Activated B cell treated with CpG ODN at 0.5 μM for 24 hours (primary cell): ENCODE measurements at regions of chr12 and their contacts with region 1.

Region 1: DNA sequence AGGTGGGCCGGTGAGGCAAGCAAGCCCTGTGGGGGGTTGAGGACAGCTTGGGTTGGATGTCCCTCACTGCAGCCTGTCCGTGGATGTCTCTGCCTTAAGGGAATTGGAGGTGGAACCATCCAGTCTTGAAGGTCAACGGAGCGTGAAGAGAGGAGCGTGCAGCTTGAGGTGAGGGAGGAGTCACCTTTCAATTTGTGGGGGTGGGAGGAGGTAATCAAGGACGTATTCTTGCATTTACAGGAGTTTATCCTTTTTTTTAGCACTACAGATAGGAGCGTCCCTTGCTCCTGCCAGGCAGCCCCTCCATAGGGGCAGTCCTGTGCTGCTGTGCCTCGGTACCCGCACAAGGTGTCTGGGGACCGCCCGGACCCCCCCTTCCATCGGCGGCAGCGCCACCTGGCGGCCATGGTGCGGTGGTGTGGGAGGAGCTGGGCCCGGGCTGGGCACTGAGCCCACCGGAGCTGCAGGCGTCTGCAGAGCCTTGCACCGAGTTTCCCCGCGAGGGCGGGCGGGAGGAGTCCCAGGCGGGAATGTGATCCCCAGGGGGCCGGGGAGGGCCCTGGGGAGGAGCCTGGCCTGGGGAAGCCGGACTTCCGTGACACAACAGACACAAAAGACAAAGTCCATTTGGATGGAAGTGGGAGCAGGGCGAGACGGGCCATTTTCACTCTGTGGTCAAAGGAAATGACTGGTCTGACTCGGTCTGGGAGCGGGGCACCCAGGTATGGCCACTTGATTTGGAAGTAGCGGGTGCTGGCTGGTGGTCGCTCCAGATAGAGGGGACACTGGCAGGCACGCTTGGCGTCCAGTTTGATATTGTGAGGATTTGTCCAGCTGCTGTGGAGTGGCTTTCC is 923 bp downstream of the DNAJC22 start:
- DNase-seq: peak; percentile 78
- ATAC-seq: peak; percentile 69
- H3K4me3 Mint-ChIP-seq: peak overlapping the region; percentile 79
- H3K27ac Mint-ChIP-seq: no peak overlapping the region
- H3K4me1 Mint-ChIP-seq: peaks cover 46% of the 10 kb centered on the region
- H3K27me3 Mint-ChIP-seq: peaks cover 49% of the 10 kb centered on the region
- CTCF ChIP-seq: peak; percentile 97

Region 2: GRCh38 chr12:48973941-48974673 is 373.5 kb before region 1 on chr12:
- CTCF ChIA-PET with region 1: no interaction called
- POLR2A ChIA-PET with region 1: no interaction called
- intact Hi-C with region 1: no loop called
- DNase-seq: no peak
- ATAC-seq: peak; percentile 27
- H3K4me3 Mint-ChIP-seq: no peak overlapping the region
- H3K27ac Mint-ChIP-seq: no peak overlapping the region
- H3K4me1 Mint-ChIP-seq: peaks cover 44% of the 10 kb centered on the region
- H3K27me3 Mint-ChIP-seq: peaks cover 52% of the 10 kb centered on the region
- CTCF ChIP-seq: no peak

Region 3: DNA sequence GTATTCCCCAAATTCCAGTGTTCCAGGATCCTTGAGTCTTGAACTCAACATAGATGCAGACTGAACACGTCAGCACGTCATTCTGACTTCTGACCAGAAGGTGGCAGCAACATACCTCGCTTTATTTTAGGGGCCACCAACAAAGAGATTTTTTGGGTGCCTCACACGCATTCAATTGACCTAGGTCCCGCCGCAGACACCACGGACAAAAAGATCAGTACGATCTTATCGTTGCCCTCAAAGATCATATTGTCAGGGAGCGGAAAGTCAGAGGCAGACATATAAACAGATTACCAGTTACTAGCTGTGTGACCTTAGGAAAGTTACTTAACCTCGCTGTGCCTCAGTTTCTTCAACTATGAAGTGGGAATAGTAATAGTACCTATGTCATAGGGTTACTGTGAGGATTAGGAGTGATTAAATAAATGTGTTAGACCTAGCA is 59.2 kb before region 1 on chr12:
- CTCF ChIA-PET with region 1: interaction called, 54 read pairs
- POLR2A ChIA-PET with region 1: interaction called, 3 read pairs
- intact Hi-C with region 1: loop called (anchors 1 kb)
- DNase-seq: peak; percentile 41
- ATAC-seq: peak; percentile 72
- H3K4me3 Mint-ChIP-seq: no peak overlapping the region
- H3K27ac Mint-ChIP-seq: no peak overlapping the region
- H3K4me1 Mint-ChIP-seq: no peaks in the 10 kb centered on the region
- H3K27me3 Mint-ChIP-seq: peaks cover 32% of the 10 kb centered on the region
- CTCF ChIP-seq: peak; percentile 27

Region 4: GRCh38 chr12:49296034-49296835 is 51.4 kb before region 1 on chr12:
- CTCF ChIA-PET with region 1: interaction called, 14 read pairs
- POLR2A ChIA-PET with region 1: interaction called, 3 read pairs
- intact Hi-C with region 1: no loop called
- DNase-seq: peak; percentile 58
- ATAC-seq: peak; percentile 79
- H3K4me3 Mint-ChIP-seq: peak overlapping the region; percentile 70
- H3K27ac Mint-ChIP-seq: no peak overlapping the region
- H3K4me1 Mint-ChIP-seq: peaks cover 26% of the 10 kb centered on the region
- H3K27me3 Mint-ChIP-seq: peaks cover 37% of the 10 kb centered on the region
- CTCF ChIP-seq: no peak

Region 5: DNA sequence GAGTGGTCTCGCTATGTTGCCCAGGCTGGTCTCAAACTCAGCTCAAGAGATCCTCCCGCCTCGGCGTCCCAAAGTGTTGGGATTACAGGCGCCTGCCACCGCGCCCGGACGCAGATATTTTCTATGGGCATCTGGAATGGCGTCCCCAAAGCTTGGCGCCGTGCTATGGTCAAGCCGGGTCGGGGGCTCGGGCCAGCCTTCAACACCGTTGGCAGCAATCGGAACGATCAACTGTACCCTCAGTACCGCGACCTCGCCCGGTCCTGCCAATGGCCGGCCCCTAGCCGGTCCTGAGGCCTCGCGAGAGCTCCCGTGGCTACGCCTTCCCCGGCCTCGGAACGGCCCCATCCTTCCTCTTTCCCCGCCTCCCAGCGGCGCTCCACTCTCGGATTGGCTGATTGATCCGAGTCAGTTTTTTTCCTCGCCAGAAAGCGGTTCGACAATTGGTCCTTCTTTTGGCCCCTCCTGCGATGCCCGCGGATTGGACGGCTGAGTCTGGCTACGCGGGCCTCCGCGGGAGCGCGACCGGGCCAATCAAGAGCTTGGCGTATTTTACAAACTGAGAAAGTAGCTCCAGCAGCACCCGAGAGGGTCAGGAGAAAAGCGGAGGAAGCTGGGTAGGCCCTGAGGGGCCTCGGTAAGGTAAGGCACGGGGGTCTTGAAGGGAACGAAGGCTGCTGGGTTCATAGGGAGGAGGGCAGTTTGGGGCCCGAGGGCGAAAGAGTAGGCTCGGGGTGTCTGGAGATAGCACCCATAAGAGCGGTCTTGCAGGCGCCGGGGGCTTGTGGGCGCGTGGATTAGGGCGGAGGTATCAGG is 24.7 kb before region 1 on chr12 and contains the start of gene TROAP:
- CTCF ChIA-PET with region 1: interaction called, 12 read pairs
- POLR2A ChIA-PET with region 1: interaction called, 11 read pairs
- intact Hi-C with region 1: no loop called
- DNase-seq: peak; percentile 85
- ATAC-seq: peak; percentile 99
- H3K4me3 Mint-ChIP-seq: peak within 1 kb of the TSS; percentile 94
- H3K27ac Mint-ChIP-seq: peak within 1 kb of the TSS; percentile 73
- H3K4me1 Mint-ChIP-seq: peaks cover 18% of the 10 kb centered on the region
- H3K27me3 Mint-ChIP-seq: no peaks in the 10 kb centered on the region
- CTCF ChIP-seq: no peak
- total RNA-seq, gene TROAP: 2.0 and 3.1 TPM in 2 replicates

Region 6: GRCh38 chr12:49331380-49332222 is 16.0 kb before region 1 on chr12:
- CTCF ChIA-PET with region 1: interaction called, 59 read pairs
- POLR2A ChIA-PET with region 1: interaction called, 6 read pairs
- intact Hi-C with region 1: loop called (anchors 1 kb)
- DNase-seq: no peak
- ATAC-seq: no peak
- H3K4me3 Mint-ChIP-seq: no peak overlapping the region
- H3K27ac Mint-ChIP-seq: no peak overlapping the region
- H3K4me1 Mint-ChIP-seq: peaks cover 16% of the 10 kb centered on the region
- H3K27me3 Mint-ChIP-seq: peaks cover 33% of the 10 kb centered on the region
- CTCF ChIP-seq: no peak

Region 7: DNA sequence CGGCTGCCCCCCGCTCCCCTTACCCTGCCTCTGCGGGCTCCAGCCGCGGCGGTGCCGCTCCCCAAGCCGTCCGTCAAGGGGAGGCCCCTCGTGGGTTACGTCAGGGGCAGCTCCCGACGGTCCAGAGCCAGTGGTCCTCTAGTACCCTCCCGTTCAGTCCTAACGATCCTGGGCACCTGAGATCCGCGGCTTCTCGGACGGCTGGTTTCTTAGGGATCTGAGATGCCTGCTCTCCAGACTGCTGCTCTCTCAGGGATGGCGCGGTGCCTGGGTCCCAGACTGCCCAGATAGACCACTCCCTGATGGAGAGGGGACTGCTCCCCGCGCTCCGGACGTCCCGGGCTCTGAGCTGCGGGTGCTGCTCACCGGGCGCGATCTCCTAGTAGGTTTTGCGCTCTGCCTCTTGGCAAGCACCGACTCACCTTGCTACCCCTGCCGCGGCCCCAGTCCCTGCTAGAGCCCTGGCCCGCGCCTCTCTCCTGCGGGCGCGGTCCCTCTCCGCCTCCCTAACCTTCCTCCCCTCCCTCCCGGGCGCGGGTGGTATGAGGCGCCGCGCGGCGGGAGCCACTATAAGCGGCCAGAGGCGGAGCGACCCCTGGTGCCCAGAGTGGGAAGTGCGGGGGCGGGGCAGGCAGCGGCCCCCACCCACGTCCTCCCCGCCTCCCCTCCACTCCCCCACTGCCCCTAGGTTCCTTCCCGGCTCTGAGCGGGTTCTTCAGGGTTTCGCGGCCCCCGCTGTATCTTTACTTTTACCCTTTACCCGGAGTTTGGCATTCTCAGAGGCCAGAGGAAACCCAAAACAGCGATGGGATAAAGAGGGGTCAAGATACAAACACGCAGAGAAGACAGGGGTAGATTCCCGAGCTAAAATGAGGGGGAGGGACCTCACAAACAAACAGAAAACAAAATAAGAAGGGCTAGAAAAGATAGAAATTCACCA is 10.7 kb before region 1 on chr12 and contains the start of gene C1QL4:
- CTCF ChIA-PET with region 1: interaction called, 59 read pairs
- POLR2A ChIA-PET with region 1: no interaction called
- intact Hi-C with region 1: loop called (anchors 1 kb)
- DNase-seq: peak; percentile 95
- ATAC-seq: peak; percentile 97
- H3K4me3 Mint-ChIP-seq: peak within 1 kb of the TSS; percentile 73
- H3K27ac Mint-ChIP-seq: no peak within 1 kb of the TSS
- H3K4me1 Mint-ChIP-seq: peaks cover 31% of the 10 kb centered on the region
- H3K27me3 Mint-ChIP-seq: peaks cover 49% of the 10 kb centered on the region
- CTCF ChIP-seq: no peak
- total RNA-seq, gene C1QL4: not detected in 2 replicates